Calu3 (cell line): ENCODE measurements at regions of chr3 and their contacts with region 1.

Region 1: DNA sequence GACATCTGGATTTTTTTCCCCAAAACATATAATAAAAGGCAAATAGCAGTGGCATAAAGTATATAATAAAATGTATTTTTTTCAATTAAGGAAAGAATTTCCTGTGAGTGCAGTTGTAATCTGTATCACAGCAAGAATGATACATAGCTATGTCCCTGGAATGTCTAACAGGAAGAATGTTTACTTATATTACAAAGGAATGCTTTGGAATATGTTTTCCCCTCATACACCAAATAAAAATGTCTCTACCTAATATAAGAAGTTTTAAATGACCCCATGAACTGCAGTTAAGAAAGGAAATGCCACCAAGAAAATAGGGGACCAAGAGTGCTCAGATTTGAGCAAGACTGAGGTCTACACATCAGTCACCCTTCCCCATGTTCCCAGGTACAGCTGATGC is 38.0 kb upstream of the ATP11B start:
- DNase-seq: no peak
- H3K4me3 Mint-ChIP-seq: no peak overlapping the region
- H3K27ac Mint-ChIP-seq: no peak overlapping the region
- H3K4me1 Mint-ChIP-seq: peaks cover 34% of the 10 kb centered on the region
- H3K27me3 Mint-ChIP-seq: no peaks in the 10 kb centered on the region
- CTCF ChIP-seq: no peak

Region 2: DNA sequence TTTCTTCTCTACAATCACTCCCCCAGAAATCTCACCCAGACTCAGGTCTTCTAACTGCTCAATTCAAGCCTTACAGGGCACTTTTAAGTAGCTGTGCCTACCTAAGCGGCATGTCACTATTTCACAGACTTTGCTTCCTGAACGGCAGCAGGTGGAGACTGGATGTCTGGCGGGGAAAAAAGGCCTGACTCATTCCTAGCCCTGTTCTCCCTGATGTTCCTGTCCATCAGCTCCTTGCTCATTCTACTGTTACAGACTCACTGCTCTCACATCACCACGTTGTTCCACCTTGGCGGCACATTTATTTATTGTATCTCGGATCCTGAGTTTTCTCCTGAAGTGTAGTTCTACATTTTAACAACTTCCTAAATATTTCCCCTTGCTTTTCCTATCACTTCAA is 14.6 kb before region 1 on chr3:
- CTCF ChIA-PET with region 1: interaction called, 4 read pairs
- intact Hi-C with region 1: loop called (anchors 2 kb)
- DNase-seq: peak; percentile 83
- H3K4me3 Mint-ChIP-seq: peak overlapping the region; percentile 27
- H3K27ac Mint-ChIP-seq: peak overlapping the region; percentile 87
- H3K4me1 Mint-ChIP-seq: peaks cover 37% of the 10 kb centered on the region
- H3K27me3 Mint-ChIP-seq: no peaks in the 10 kb centered on the region
- CTCF ChIP-seq: no peak

Region 3: DNA sequence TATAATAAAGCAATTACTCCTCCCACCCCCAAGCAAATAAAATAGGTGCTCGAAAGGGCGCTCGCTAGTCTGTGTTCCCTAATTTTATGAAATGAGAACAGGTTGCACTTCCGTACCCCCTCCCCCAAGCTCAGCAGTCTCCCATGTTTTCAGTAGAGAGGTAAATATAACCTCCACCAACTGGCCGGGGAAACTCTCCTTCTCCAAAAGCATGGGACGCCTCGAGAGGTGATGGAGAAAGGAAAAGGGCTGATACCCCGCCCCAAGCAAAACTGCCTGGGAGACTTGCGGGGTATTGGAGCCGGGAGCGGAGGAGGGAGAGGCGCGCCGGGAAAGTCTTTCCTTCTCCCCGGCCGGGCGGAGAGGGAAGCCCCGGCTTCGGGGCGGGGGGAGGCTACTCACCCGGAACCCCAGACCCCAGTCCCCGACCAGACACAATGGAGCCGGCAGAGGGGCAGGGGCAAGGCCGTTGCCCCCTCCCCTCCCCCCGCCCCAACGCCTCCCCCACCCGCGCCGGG is 224.4 kb after region 1 on chr3:
- CTCF ChIA-PET with region 1: interaction called, 10 read pairs
- intact Hi-C with region 1: no loop called
- DNase-seq: peak; percentile 44
- H3K4me3 Mint-ChIP-seq: peak overlapping the region; percentile 92
- H3K27ac Mint-ChIP-seq: peak overlapping the region; percentile 77
- H3K4me1 Mint-ChIP-seq: peaks cover 9% of the 10 kb centered on the region
- H3K27me3 Mint-ChIP-seq: no peaks in the 10 kb centered on the region
- CTCF ChIP-seq: no peak

Region 4: GRCh38 chr3:183018421-183019192 is 263.3 kb after region 1 on chr3:
- CTCF ChIA-PET with region 1: no interaction called
- intact Hi-C with region 1: no loop called
- DNase-seq: no peak
- H3K4me3 Mint-ChIP-seq: no peak overlapping the region
- H3K27ac Mint-ChIP-seq: no peak overlapping the region
- H3K4me1 Mint-ChIP-seq: no peaks in the 10 kb centered on the region
- H3K27me3 Mint-ChIP-seq: no peaks in the 10 kb centered on the region
- CTCF ChIP-seq: no peak